MCF 10A (cell line): ENCODE measurements at regions of chr15 and their contacts with region 1.

Region 1: DNA sequence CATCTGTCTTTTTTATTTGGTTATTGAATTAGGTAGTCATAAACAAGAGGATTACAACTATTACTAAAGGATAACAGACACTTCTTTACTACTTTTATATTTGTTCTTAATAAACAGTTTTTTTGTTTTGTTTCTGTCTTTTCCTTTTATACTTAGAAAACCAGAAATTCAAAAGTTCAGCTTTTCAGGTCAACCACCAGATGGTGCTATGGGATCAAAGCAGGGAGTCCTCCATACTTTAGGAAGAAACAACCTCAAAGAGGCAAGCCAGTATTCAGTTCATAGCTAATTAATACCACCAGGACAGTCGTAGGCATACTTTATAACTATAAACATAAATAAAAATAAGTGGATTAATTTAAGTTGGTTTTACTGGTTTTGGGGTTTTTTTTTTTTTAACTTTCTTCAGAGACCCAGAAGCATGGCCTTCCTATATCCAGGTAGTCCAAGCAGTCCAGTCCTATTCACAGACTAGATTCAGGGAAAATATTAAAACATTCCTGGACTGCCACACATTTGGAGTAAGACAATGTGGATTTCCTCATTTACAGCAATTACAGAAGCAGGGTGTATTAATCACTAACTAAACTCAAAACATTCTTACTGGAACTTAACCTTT is 16.0 kb upstream of the EID1 start:
- DNase-seq: peak; percentile 72
- H3K4me3 Mint-ChIP-seq: no peak overlapping the region
- H3K27ac Mint-ChIP-seq: peak overlapping the region; percentile 61
- H3K4me1 Mint-ChIP-seq: peaks cover 29% of the 10 kb centered on the region
- H3K27me3 Mint-ChIP-seq: no peaks in the 10 kb centered on the region
- CTCF ChIP-seq: peak; percentile 73

Region 2: DNA sequence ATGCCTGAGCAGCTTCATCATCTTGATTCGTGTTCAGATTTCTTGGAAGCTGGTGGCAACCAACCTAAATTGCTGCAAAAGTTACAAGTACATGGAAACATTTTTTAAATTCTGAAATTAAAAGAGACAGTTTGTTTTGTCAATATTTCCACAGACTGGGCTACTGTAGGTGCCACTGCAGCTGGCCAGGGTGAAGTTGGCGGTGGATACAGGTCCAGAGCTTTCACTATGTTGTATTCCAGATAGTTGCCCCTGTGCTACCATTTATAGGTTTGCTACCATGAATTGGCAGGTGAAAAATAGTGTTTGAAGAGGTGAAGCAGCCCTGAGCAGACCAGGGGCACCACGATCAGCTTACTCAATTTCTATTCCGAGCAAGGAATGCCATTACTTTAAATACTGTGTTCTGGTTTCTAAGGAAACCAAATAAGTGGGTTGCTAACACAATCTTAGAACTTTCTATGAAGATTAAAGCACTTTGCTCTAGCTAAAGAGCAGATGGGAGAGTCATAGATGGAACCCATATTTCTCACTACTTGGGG is 123.0 kb after region 1 on chr15:
- CTCF ChIA-PET with region 1: interaction called, 11 read pairs
- POLR2A ChIA-PET with region 1: interaction called, 3 read pairs
- intact Hi-C with region 1: no loop called
- DNase-seq: no peak
- H3K4me3 Mint-ChIP-seq: no peak overlapping the region
- H3K27ac Mint-ChIP-seq: no peak overlapping the region
- H3K4me1 Mint-ChIP-seq: peaks cover 6% of the 10 kb centered on the region
- H3K27me3 Mint-ChIP-seq: no peaks in the 10 kb centered on the region
- CTCF ChIP-seq: no peak

Region 3: DNA sequence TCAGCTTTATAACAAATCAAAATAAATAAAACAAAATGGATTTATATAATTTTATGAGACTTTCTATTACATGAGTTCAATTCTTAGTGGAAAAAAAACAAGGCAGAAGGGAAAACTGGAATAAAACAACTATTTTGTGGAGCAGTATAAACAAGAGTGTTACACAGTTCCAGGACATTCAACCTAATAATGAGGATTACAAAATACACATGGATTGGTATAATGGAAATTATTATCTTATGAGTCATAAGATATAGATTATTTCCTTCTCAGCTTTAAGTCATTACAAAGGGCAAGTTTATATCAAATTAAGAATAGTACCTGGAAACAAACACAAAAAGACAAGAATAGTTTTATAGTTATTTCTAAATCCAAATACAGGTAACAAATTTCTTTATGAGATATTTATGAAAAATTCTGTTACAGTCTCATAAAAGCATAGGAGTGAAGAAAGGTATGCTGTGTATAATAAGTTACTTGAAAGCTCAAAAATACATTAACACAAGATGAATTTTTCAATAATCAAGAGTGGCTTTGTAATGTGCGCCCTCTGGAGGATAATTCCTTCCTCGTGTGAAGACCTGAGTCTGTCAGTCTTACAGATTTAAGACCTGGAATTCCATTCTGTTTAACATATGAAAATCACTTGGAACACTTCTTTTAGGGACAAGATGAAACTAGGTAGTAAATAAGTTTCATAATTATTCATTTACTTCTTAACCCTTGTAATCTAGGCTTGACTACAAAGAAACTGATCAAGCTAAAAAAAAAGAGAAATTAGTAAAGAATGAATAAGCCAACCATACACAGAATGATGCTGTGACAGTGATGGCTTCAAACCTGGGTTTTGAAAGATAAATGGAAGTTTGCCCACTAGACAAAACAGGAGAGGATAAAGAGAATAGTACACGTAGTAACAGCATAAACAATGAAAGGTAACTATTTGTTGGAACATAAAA is 284.0 kb after region 1 on chr15:
- CTCF ChIA-PET with region 1: interaction called, 46 read pairs
- POLR2A ChIA-PET with region 1: interaction called, 6 read pairs
- intact Hi-C with region 1: loop called (anchors 2 kb)
- DNase-seq: peak; percentile 58
- H3K4me3 Mint-ChIP-seq: no peak overlapping the region
- H3K27ac Mint-ChIP-seq: no peak overlapping the region
- H3K4me1 Mint-ChIP-seq: peaks cover 33% of the 10 kb centered on the region
- H3K27me3 Mint-ChIP-seq: no peaks in the 10 kb centered on the region
- CTCF ChIP-seq: peak; percentile 64

Region 4: GRCh38 chr15:49235446-49236124 is 373.7 kb after region 1 on chr15:
- CTCF ChIA-PET with region 1: interaction called, 3 read pairs
- POLR2A ChIA-PET with region 1: no interaction called
- intact Hi-C with region 1: loop called (anchors 2 kb)
- DNase-seq: peak; percentile 69
- H3K4me3 Mint-ChIP-seq: no peak overlapping the region
- H3K27ac Mint-ChIP-seq: peak overlapping the region; percentile 35
- H3K4me1 Mint-ChIP-seq: peaks cover 9% of the 10 kb centered on the region
- H3K27me3 Mint-ChIP-seq: no peaks in the 10 kb centered on the region
- CTCF ChIP-seq: peak; percentile 74